PC-3 (cell line): ENCODE measurements at regions of chr2 and their contacts with region 1.

Region 1: GRCh38 chr2:71226965-71227560 is at the start of gene PAIP2B:
- DNase-seq: peak; percentile 99
- ATAC-seq: peak; percentile 89
- H3K4me3 ChIP-seq: peak within 1 kb of the TSS; percentile 86
- H3K27ac ChIP-seq: no peak within 1 kb of the TSS
- H3K4me1 ChIP-seq: peaks cover 10% of the 10 kb centered on the region; the same call in 1 of the 2 replicates
- H3K27me3 ChIP-seq: no peaks in the 10 kb centered on the region
- CTCF ChIP-seq: no peak
- total RNA-seq, gene PAIP2B: 3.8 and 4.0 TPM in 2 replicates

Region 2: DNA sequence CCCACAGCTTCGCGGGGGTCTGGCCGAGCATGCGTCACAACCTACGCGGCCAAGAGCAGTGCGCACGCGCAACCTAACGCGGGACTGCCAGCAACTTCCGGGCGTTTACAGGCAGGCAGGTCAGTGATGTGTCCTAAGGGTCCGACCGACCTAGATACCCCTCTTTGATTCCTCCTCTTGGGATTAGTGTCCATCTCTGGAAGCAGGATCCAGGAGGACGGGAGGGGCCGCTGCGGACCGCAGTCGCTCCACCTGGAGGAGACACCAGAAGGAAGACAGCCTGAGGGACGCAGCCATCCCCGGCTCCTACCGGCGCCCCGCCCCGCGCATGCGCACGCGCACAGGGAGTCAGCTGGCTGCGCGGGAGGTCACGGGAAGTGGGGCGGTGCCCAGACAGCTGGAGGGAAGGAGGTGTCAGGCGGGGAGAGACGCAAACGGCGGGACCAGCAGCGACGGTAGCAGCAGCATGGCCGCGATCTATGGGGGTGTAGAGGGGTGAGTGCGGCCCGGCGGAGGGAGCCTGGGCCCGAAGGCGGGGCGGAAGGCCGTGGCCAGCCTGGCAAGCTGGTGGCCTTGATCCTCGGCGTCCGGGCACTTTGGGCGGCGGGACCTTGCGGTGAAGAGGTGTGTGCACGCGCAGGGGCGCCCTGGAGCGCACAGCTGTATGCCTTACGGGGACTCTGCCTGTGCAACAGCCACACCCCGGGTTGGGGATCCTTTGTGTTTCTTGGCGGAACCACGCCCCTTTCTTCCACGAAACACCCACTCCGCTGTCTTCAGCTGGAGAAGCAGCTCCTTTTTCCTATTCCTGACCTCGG is 158.6 kb before region 1 on chr2 and contains the start of gene NAGK:
- CTCF ChIA-PET with region 1: no interaction called
- POLR2A ChIA-PET with region 1: interaction called, 11 read pairs
- intact Hi-C with region 1: no loop called
- DNase-seq: peak; percentile 94
- ATAC-seq: peak; percentile 81
- H3K4me3 ChIP-seq: peak within 1 kb of the TSS; percentile 84
- H3K27ac ChIP-seq: peak within 1 kb of the TSS; percentile 75
- H3K4me1 ChIP-seq: peaks cover 41% of the 10 kb centered on the region
- H3K27me3 ChIP-seq: no peaks in the 10 kb centered on the region; the same call in 1 of the 2 replicates
- CTCF ChIP-seq: no peak
- total RNA-seq, gene NAGK: 55.5 and 70.5 TPM in 2 replicates

Region 3: DNA sequence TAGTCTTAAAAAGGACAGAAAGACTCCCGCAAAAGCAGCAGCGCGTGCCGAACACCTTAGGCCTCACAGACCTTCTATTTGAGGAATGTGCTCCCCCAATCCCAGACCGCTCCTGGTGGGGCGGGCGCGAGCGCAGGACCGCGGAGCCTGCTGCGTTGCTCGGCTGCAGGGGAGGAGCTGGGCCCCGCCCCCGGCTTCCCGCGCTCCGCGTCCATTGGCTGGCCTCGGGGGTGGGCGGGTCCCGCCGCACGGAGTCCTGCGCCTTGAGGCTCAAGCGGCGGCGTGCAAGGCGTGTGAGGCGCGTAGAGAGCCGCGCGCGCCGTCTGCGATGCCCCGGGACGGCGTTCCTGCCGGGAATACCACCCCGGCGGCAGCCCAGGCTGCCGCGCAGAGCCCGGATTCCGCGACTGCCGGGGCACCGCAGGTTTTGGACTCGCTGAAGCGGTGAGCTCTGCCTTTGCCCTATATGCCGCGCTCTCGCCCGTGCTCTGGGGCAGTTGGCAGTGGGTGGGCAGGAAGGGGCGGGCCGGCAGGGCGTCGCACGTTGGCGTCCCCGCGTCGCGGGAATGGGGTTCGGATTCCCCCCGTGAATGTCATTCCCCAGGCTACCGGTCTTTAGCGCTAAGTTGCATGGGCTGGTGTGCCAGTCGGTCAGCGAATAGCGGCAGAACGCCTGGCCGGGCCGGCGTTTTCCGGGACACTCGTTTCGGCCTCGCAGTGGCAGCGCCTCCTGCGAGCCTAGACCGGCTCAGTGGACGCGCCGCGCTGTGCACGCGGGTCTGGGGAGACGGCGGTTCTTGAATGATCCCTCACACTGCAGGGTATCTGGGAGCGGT is 49.5 kb after region 1 on chr2:
- CTCF ChIA-PET with region 1: interaction called, 3 read pairs
- POLR2A ChIA-PET with region 1: interaction called, 4 read pairs
- intact Hi-C with region 1: loop called (anchors 1 kb)
- DNase-seq: peak; percentile 96
- ATAC-seq: peak; percentile 91
- H3K4me3 ChIP-seq: peak overlapping the region; percentile 76
- H3K27ac ChIP-seq: no peak overlapping the region
- H3K4me1 ChIP-seq: peaks cover 23% of the 10 kb centered on the region
- H3K27me3 ChIP-seq: no peaks in the 10 kb centered on the region
- CTCF ChIP-seq: no peak

Region 4: GRCh38 chr2:71331581-71332434 is 104.7 kb after region 1 on chr2 and contains the start of gene ZNF638:
- CTCF ChIA-PET with region 1: interaction called, 17 read pairs
- POLR2A ChIA-PET with region 1: interaction called, 6 read pairs
- intact Hi-C with region 1: loop called (anchors 1 kb)
- DNase-seq: peak; percentile 96
- ATAC-seq: peak; percentile 95
- H3K4me3 ChIP-seq: peak within 1 kb of the TSS; percentile 88
- H3K27ac ChIP-seq: peak within 1 kb of the TSS; percentile 48
- H3K4me1 ChIP-seq: peaks cover 29% of the 10 kb centered on the region
- H3K27me3 ChIP-seq: no peaks in the 10 kb centered on the region
- CTCF ChIP-seq: peak; percentile 70
- total RNA-seq, gene ZNF638: 82.9 and 93.2 TPM in 2 replicates

Region 5: DNA sequence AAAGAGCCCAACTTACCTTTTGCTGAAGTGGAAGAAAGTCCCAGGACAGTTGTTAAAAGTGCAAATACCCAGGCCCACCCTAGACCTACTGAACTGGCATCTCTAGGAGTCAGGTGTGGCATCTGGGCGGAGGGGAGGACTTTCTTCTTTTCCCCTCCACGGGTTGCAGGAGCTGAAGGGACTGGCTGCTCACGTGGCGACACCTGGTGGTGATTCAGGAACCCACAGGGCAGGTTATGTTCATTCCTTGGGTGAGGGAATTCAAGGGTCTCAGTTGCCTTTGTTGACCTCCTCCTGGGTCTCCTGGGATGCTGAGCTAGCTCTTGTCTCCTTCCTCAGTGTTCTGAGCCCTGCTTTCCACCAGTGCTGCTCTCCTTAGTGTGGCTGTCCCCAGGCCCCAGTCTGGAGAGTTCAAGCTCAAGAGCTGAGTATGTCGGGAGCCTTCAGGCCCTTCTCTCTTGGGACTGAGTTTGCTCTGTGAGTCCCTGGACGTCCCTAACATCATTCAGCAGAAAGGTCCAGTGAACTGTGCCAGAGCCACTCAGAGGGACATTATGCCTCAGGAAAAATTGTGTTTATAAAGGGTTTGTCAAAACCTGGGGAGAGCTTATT is 283.2 kb after region 1 on chr2:
- CTCF ChIA-PET with region 1: no interaction called
- POLR2A ChIA-PET with region 1: no interaction called
- intact Hi-C with region 1: loop called (anchors 1 kb)
- DNase-seq: peak; percentile 73
- ATAC-seq: peak; percentile 90
- H3K4me3 ChIP-seq: no peak overlapping the region
- H3K27ac ChIP-seq: no peak overlapping the region
- H3K4me1 ChIP-seq: no peaks in the 10 kb centered on the region
- H3K27me3 ChIP-seq: no peaks in the 10 kb centered on the region
- CTCF ChIP-seq: peak; percentile 95

Region 6: GRCh38 chr2:71592181-71592711 is 365.2 kb after region 1 on chr2:
- CTCF ChIA-PET with region 1: no interaction called
- POLR2A ChIA-PET with region 1: no interaction called
- intact Hi-C with region 1: no loop called
- DNase-seq: no peak
- ATAC-seq: no peak
- H3K4me3 ChIP-seq: no peak overlapping the region
- H3K27ac ChIP-seq: no peak overlapping the region
- H3K4me1 ChIP-seq: no peaks in the 10 kb centered on the region
- H3K27me3 ChIP-seq: no peaks in the 10 kb centered on the region
- CTCF ChIP-seq: no peak